Mammary epithelial cell (primary cell): ENCODE measurements at regions of chr19 and their contacts with region 1.

Region 1: GRCh38 chr19:2944775-2945574 is at the start of gene ZNF77:
- DNase-seq: peak; percentile 99
- H3K4me3 ChIP-seq: peak within 1 kb of the TSS; percentile 80 to 85 (median 84)
- H3K27ac ChIP-seq: peak within 1 kb of the TSS; percentile 71
- H3K4me1 ChIP-seq: peaks cover 6% of the 10 kb centered on the region
- H3K27me3 ChIP-seq: no peaks in the 10 kb centered on the region
- CTCF ChIP-seq: no peak
- total RNA-seq, gene ZNF77: 5.5 to 5.7 TPM

Region 2: GRCh38 chr19:2840794-2841790 is 103.9 kb before region 1 on chr19 and contains the start of gene ZNF555:
- CTCF ChIA-PET with region 1: no interaction called
- dilution Hi-C with region 1: no loop called
- in situ Hi-C with region 1: no loop called
- intact Hi-C with region 1: loop called (anchors 2 kb)
- DNase-seq: peak; percentile 99
- H3K4me3 ChIP-seq: peak within 1 kb of the TSS; percentile 72 to 89 (median 80)
- H3K27ac ChIP-seq: peak within 1 kb of the TSS; percentile 29
- H3K4me1 ChIP-seq: peaks cover 6% of the 10 kb centered on the region
- H3K27me3 ChIP-seq: no peaks in the 10 kb centered on the region
- CTCF ChIP-seq: peak; percentile 35 to 58
- total RNA-seq, gene ZNF555: 4.6 to 7.2 TPM

Region 3: GRCh38 chr19:2887391-2887914 is 57.5 kb before region 1 on chr19:
- CTCF ChIA-PET with region 1: no interaction called
- dilution Hi-C with region 1: no loop called
- in situ Hi-C with region 1: no loop called
- intact Hi-C with region 1: loop called (anchors 1 kb)
- DNase-seq: peak; percentile 66
- H3K4me3 ChIP-seq: peak overlapping the region in 2 of 3 experiments; percentile 19 to 35
- H3K27ac ChIP-seq: no peak overlapping the region
- H3K4me1 ChIP-seq: no peaks in the 10 kb centered on the region
- H3K27me3 ChIP-seq: no peaks in the 10 kb centered on the region
- CTCF ChIP-seq: peak; percentile 66 to 68

Region 4: DNA sequence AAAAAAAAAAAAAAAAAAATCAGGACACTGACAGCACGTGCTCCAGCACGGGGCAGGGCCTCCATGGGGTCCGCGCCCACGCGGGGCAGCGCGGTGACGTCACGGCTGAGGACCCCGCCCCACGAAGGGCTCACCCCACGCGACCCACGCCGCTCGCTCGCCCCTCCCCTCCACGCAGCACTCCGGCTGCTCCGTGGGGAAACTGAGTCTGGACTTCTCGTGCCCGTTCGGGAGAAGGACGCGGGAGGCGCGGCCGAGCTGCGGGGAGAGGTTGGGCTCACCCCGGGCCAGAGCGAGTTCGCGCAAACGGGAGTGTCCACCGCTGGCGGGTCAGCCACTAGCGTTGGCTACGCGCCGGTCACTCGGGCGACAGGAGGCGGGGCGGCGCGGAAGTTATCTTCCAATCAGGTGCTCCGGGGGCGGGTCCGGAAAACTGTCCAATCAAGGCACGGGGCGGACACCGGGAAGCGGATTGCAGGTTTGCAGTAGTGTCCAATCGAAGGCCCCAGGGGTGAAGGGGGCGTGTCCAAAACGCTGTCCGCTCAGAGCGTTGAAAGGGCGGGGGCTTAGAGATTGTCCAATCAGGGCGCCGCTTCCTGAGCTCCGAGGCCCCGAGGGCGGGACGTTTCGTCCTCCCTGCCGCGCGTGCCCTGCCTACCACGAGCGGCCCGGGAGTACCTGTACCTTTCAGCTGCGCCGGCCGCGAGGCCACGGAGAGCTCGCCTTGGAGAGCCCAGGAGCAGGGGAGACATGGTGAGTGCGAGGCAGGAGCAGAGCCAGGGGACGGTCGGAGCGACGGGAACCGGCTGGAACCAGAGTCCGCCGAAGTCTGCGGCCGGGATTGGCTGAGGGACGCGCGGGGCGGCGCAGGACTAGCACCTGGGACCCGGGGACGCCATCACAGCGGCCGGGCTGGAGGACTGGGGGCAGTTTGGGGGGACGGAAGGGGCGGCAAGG is 44.4 kb before region 1 on chr19 and contains the start of gene ZNF57:
- CTCF ChIA-PET with region 1: no interaction called
- dilution Hi-C with region 1: no loop called
- in situ Hi-C with region 1: loop called in 1 of 2 experiments (anchors 5 kb)
- intact Hi-C with region 1: loop called (anchors 2 kb)
- DNase-seq: peak; percentile 99
- H3K4me3 ChIP-seq: peak within 1 kb of the TSS; percentile 87 to 99 (median 92)
- H3K27ac ChIP-seq: peak within 1 kb of the TSS; percentile 70
- H3K4me1 ChIP-seq: peaks cover 15% of the 10 kb centered on the region
- H3K27me3 ChIP-seq: no peaks in the 10 kb centered on the region
- CTCF ChIP-seq: no peak
- total RNA-seq, gene ZNF57: 7.7 to 12.0 TPM

Region 5: DNA sequence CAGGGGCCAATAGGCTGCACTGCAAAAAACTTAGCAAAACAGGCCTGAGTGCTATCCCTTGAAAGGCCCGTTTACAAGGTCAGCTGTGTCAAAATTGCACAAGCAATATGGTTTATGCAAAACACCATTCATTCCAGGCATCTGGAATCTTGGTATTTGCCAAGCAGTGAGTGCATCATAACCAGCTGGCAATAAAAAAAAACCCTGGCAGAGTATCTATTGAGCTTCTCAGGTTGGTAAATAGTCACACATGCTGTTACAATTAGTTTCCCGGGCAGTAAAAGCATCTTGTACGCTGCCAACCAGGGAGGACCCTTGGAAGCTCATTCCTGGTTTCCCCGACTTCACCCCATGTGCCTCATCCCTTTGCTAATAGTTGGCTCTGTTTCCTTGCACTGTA is 21.5 kb before region 1 on chr19:
- CTCF ChIA-PET with region 1: no interaction called
- dilution Hi-C with region 1: no loop called
- in situ Hi-C with region 1: no loop called
- intact Hi-C with region 1: loop called (anchors 2 kb)
- DNase-seq: peak; percentile 71
- H3K4me3 ChIP-seq: no peak overlapping the region
- H3K27ac ChIP-seq: peak overlapping the region; percentile 19
- H3K4me1 ChIP-seq: peaks cover 9% of the 10 kb centered on the region
- H3K27me3 ChIP-seq: no peaks in the 10 kb centered on the region
- CTCF ChIP-seq: no peak